ENCODE measurements at regions of chr7 and their contacts with region 1.

Region 1: GRCh38 chr7:112571852-112572607 is 91.2 kb downstream of the LSMEM1 start:
- DNase-seq: no peak
- ATAC-seq: no peak
- H3K4me3 ChIP-seq: no peak overlapping the region
- H3K27ac ChIP-seq: no peak overlapping the region
- H3K4me1 ChIP-seq: no peaks in the 10 kb centered on the region
- H3K27me3 ChIP-seq: no peaks in the 10 kb centered on the region
- CTCF ChIP-seq: no peak
- POLR2A ChIP-seq: no peak
- RAD21 ChIP-seq: no peak

Region 2: GRCh38 chr7:112630565-112630964 is 58.5 kb after region 1 on chr7:
- CTCF ChIA-PET with region 1: no interaction called
- POLR2A ChIA-PET with region 1: no interaction called
- dilution Hi-C with region 1: no loop called
- in situ Hi-C with region 1: no loop called
- intact Hi-C with region 1: loop called (anchors 2 kb)
- DNase-seq: peak; percentile 27
- ATAC-seq: peak; percentile 62
- H3K4me3 ChIP-seq: no peak overlapping the region
- H3K27ac ChIP-seq: no peak overlapping the region
- H3K4me1 ChIP-seq: no peaks in the 10 kb centered on the region
- H3K27me3 ChIP-seq: no peaks in the 10 kb centered on the region
- CTCF ChIP-seq: no peak
- POLR2A ChIP-seq: no peak
- RAD21 ChIP-seq: no peak

Measured in IMR-90 (cell line).